ENCODE measurements at regions of chr3 and their contacts with region 1.

Region 1: GRCh38 chr3:180036671-180037455 is at the start of gene PEX5L:
- DNase-seq: peak; percentile 23 to 84 (median 71)
- H3K4me3 ChIP-seq: peak within 1 kb of the TSS; percentile 45 to 93 (median 71)
- H3K27ac ChIP-seq: peak within 1 kb of the TSS in 57 of 59 donors; percentile 23 to 89 (median 73)
- H3K27me3 ChIP-seq: peaks cover 0 to 6% (median 0%) of the 10 kb centered on the region in 45 donors
- CTCF ChIP-seq: peak in 25 of 56 donors; percentile 5 to 49 (median 22)
- total RNA-seq, gene PEX5L: 144 to 392 (median 245) TPM

Region 2: GRCh38 chr3:179921500-179921899 is 115.4 kb before region 1 on chr3:
- intact Hi-C with region 1: loop called in 1 of 2 experiments (anchors 5 kb)
- DNase-seq: peak in 3 of 10 donors; percentile 40 to 80 (median 53)
- H3K4me3 ChIP-seq: peak overlapping the region in 1 of 59 donors; percentile 27
- H3K27ac ChIP-seq: peak overlapping the region in 44 of 59 donors; percentile 1 to 82 (median 56)
- H3K27me3 ChIP-seq: no peaks in the 10 kb centered on the region
- CTCF ChIP-seq: peak in 1 of 56 donors; percentile 23

Region 3: DNA sequence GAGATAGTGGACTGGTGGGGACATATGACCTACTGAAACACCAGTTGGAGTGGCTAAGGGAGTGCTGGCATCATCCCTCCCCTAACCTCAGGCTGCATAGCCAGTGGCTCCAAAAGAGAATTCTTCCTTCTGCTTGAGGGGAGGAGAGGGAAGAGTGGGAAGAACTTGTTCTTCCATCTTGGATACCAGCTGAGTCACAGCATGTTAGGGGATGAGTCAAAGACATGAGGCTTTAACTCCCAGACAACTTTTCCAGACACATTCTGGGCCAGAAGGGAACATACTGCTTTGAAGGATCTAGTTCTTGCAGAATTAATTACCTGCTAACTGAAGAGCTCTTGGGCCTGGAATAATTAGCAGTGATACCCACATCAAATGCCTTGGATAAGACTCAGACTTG is 36.7 kb after region 1 on chr3:
- intact Hi-C with region 1: no loop called
- DNase-seq: no peak
- H3K4me3 ChIP-seq: no peak overlapping the region
- H3K27ac ChIP-seq: peak overlapping the region in 24 of 59 donors; percentile 5 to 69 (median 54)
- H3K27me3 ChIP-seq: no peaks in the 10 kb centered on the region
- CTCF ChIP-seq: no peak

Region 4: DNA sequence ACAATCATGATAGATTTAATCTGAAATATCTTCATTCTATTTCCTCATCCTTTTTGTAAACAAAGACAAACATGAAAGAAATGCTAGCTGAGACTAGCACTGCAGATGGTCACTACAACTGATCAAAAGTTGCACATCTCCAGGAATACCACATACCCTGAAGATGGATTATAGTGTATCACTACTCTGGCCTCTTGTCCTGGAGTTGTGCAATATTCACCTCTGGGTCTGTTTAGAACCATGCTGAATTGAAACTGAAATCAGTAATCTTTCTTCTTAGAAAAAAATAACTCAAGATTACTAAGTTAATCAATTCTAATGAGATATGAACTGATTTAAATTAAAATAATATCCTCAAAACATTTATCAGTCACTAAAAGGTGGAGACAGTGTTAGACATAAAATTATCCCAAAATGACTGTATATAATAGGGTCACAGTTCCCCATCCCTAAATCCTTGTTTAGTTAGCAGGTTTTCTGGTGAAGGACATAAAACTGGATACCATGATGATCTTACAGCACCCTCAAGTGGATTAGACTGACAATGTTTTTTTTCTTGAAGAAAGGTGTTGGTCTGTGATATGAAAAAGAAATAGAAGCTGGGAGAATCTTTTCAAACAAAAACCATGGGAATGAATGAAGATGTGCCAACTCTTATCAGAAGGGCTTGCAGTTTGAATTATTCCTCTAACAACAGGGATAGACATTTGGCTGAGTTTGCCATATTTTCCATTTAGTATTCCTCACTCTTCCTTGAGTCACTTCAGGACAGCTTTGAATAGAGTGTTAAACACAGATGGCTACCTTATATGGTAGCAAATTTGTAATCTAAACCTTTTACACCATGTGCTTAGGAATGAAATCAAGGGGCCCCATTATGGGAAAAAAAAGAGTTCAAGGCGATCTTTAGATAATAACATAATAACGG is 558.0 kb after region 1 on chr3:
- intact Hi-C with region 1: loop called in 1 of 2 experiments (anchors 10 kb)
- DNase-seq: no peak
- H3K4me3 ChIP-seq: no peak overlapping the region
- H3K27ac ChIP-seq: no peak overlapping the region
- H3K27me3 ChIP-seq: no peaks in the 10 kb centered on the region
- CTCF ChIP-seq: peak in 55 of 56 donors; percentile 42 to 81 (median 64)

Measured in dorsolateral prefrontal cortex (tissue), 120 donors.